ENCODE measurements at regions of chr5 and their contacts with region 1.

Region 1: DNA sequence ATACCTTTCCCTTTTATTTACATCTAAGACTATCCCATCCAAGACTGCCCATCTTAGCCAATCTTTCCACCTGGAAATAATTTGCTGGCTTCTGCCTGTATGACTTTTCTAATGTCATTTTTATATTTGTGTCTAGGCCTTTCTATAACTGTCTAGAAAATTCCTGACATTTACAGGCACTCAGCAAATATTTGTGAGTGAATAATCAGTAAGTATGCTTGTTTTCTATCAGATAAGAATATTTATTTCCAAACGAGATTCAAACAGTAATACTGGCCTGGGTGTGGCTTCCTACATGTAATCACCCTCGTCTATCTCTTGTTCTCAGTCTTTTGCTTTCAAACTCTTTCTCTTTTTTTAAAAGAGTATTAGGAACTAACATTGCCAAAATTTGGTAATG is 466.2 kb downstream of the RAB3C start:
- DNase-seq: no peak
- ATAC-seq: no peak
- H3K4me3 ChIP-seq: no peak overlapping the region
- H3K4me3 Mint-ChIP-seq: no peak overlapping the region
- H3K27ac ChIP-seq: no peak overlapping the region
- H3K27ac Mint-ChIP-seq: no peak overlapping the region
- H3K4me1 ChIP-seq: no peaks in the 10 kb centered on the region
- H3K4me1 Mint-ChIP-seq: no peaks in the 10 kb centered on the region
- H3K27me3 ChIP-seq: no peaks in the 10 kb centered on the region
- H3K27me3 Mint-ChIP-seq: no peaks in the 10 kb centered on the region
- CTCF ChIP-seq: no peak

Region 2: GRCh38 chr5:59079622-59080620 is 30.9 kb after region 1 on chr5:
- CTCF ChIA-PET with region 1: no interaction called
- POLR2A ChIA-PET with region 1: no interaction called
- intact Hi-C with region 1: loop called in 1 of 2 experiments (anchors 5 kb)
- DNase-seq: no peak
- ATAC-seq: no peak
- H3K4me3 ChIP-seq: no peak overlapping the region
- H3K4me3 Mint-ChIP-seq: no peak overlapping the region
- H3K27ac ChIP-seq: no peak overlapping the region
- H3K27ac Mint-ChIP-seq: no peak overlapping the region
- H3K4me1 ChIP-seq: no peaks in the 10 kb centered on the region
- H3K4me1 Mint-ChIP-seq: no peaks in the 10 kb centered on the region
- H3K27me3 ChIP-seq: no peaks in the 10 kb centered on the region
- H3K27me3 Mint-ChIP-seq: peaks cover 5% of the 10 kb centered on the region
- CTCF ChIP-seq: no peak